ENCODE measurements at regions of chr10 and their contacts with region 1.

Region 1: GRCh38 chr10:77641788-77642397 is 4.3 kb upstream of the KCNMA1 start:
- DNase-seq: peak in 4 of 5 donors; percentile 38 to 50 (median 46)
- ATAC-seq: peak in 1 of 4 donors; percentile 63
- H3K4me3 ChIP-seq: no peak overlapping the region
- H3K27ac ChIP-seq: no peak overlapping the region
- H3K4me1 ChIP-seq: peaks cover 0 to 16% (median 0%) of the 10 kb centered on the region in 12 donors
- H3K27me3 ChIP-seq: peaks cover 17 to 53% (median 36%) of the 10 kb centered on the region in 9 donors
- CTCF ChIP-seq: peak; percentile 70 to 86 (median 81)
- POLR2A ChIP-seq: no peak

Region 2: DNA sequence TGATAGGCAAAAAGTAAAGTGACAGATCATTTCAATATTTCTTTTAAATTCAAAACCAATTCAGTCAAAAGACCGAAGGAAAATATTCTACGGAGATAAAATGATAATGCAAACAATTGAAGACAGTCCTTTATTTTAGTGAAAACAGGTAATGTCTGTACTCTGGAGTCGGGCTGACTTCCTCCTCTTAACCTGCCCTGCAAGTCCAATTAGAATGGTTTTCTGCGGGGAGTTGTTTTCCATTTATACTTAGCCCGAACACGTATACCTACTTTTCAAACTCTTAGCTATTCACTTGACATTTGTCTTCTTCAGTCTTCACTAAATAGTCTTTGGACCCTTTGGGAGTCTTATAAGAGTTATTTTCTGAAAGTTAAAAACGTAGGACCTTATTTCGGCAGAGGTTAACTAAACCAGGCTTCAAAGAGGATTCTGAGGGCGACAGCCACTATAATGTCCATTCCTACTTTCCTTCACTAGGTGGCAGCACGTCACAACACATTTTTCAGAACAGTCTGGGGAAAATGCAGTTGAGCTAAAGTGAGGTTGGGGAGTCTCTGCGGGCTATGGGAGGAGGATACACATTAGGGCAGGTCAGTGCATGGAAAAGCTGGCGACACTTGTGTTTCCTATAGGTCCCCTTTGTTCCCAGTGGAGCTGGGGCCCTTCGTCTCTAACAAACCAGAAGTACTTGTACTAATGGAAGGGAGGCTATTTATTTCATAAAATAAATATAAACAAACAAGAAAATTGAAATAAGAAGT is 476.3 kb before region 1 on chr10:
- intact Hi-C with region 1: loop called in 1 of 10 experiments (anchors 2 kb)
- DNase-seq: peak in 3 of 5 donors; percentile 21 to 29 (median 25)
- ATAC-seq: peak in 3 of 4 donors; percentile 53 to 81 (median 76)
- H3K4me3 ChIP-seq: no peak overlapping the region
- H3K27ac ChIP-seq: no peak overlapping the region
- H3K4me1 ChIP-seq: peaks cover 0 to 4% (median 0%) of the 10 kb centered on the region in 12 donors
- H3K27me3 ChIP-seq: peaks cover 0 to 11% (median 4%) of the 10 kb centered on the region in 9 donors
- CTCF ChIP-seq: peak; percentile 58 to 84 (median 68)
- POLR2A ChIP-seq: no peak

Region 3: DNA sequence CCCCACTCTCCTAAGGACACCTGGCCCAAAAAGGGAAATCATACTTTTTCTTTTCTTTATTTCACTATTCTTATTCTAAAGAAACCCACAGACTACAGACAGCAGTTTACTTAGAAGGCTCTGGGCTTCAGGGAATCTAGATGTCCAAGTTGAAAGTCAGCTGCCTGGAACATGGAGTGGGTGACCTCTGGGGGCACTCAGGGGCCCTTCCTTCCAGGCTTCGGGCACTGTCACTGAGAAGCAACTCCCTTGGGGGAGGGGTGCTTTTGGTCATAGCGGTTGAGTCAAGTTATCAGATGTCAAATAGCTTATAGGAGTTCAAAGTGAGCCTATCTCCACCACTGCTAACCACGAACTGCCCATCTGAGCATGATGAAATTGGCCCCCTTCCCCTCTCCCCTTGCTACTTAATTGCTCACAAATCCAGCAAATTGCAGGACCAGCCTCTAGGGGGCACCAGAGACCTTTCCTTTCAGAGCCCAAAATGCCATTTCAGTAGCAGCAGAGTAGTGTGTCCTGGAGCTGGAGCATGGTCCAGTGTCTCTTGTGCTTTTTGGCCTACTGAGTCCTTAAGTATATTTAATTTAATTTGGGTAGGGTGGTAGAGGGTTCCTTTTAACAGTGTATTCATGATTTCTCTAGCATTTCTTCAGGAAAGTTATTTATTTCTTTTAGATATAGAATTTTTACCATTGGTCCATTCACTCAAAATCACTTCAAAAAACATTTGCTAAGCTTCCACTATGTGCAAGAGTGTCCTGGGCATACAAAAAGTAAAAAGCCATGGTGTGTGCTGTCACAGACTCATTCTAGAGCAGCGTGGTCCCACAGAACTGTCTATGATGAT is 468.1 kb before region 1 on chr10:
- intact Hi-C with region 1: loop called (anchors 1 to 2 kb)
- DNase-seq: peak; percentile 48 to 60 (median 59)
- ATAC-seq: peak in 3 of 4 donors; percentile 69 to 79 (median 77)
- H3K4me3 ChIP-seq: no peak overlapping the region
- H3K27ac ChIP-seq: peak overlapping the region in 1 of 12 donors; percentile 74
- H3K4me1 ChIP-seq: no peaks in the 10 kb centered on the region
- H3K27me3 ChIP-seq: peaks cover 0 to 25% (median 0%) of the 10 kb centered on the region in 9 donors
- CTCF ChIP-seq: peak; percentile 74 to 95 (median 86)
- POLR2A ChIP-seq: no peak

Region 4: GRCh38 chr10:77251297-77252013 is 390.4 kb before region 1 on chr10:
- intact Hi-C with region 1: loop called in 2 of 10 experiments (anchors 5 kb)
- DNase-seq: no peak
- ATAC-seq: no peak
- H3K4me3 ChIP-seq: no peak overlapping the region
- H3K27ac ChIP-seq: peak overlapping the region in 1 of 12 donors; percentile 2
- H3K4me1 ChIP-seq: peaks cover 0 to 14% (median 0%) of the 10 kb centered on the region in 12 donors
- H3K27me3 ChIP-seq: peaks cover 0 to 12% (median 0%) of the 10 kb centered on the region in 9 donors
- CTCF ChIP-seq: peak in 8 of 12 donors; percentile 7 to 36 (median 24)
- POLR2A ChIP-seq: no peak

Region 5: GRCh38 chr10:77391605-77392235 is 250.2 kb before region 1 on chr10:
- intact Hi-C with region 1: loop called (anchors 1 to 5 kb)
- DNase-seq: peak; percentile 54 to 75 (median 66)
- ATAC-seq: peak in 3 of 4 donors; percentile 62 to 81 (median 72)
- H3K4me3 ChIP-seq: no peak overlapping the region
- H3K27ac ChIP-seq: peak overlapping the region in 1 of 12 donors; percentile 70
- H3K4me1 ChIP-seq: peaks cover 0 to 24% (median 10%) of the 10 kb centered on the region in 12 donors
- H3K27me3 ChIP-seq: peaks cover 0 to 4% (median 0%) of the 10 kb centered on the region in 9 donors
- CTCF ChIP-seq: peak; percentile 31 to 64 (median 48)
- POLR2A ChIP-seq: no peak

Region 6: DNA sequence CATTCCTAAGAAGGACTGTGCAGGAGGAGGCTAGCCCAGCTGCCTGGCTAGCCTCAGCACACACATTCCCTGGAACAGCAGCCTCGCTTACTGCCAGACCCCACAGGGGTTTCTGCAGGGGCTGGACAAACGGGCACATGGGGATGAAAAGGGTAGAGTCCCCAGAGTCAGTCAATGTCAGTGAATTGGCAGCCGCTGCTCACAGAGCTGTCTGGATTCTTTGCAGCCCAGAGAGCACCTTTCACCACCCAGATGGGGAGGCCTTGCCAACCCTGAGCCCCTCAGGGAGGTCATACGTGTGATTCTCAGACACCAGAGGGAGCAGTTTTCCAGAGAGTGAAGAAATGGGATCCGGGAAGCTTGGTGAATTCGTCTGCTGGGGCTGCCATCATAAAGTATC is 147.6 kb before region 1 on chr10:
- intact Hi-C with region 1: loop called in 8 of 10 experiments (anchors 2 to 10 kb)
- DNase-seq: no peak
- ATAC-seq: no peak
- H3K4me3 ChIP-seq: no peak overlapping the region
- H3K27ac ChIP-seq: no peak overlapping the region
- H3K4me1 ChIP-seq: peaks cover 0 to 6% (median 0%) of the 10 kb centered on the region in 12 donors
- H3K27me3 ChIP-seq: no peaks in the 10 kb centered on the region
- CTCF ChIP-seq: peak in 8 of 12 donors; percentile 10 to 43 (median 18)
- POLR2A ChIP-seq: no peak